ENCODE measurements at regions of chr12 and their contacts with region 1.

Region 1: DNA sequence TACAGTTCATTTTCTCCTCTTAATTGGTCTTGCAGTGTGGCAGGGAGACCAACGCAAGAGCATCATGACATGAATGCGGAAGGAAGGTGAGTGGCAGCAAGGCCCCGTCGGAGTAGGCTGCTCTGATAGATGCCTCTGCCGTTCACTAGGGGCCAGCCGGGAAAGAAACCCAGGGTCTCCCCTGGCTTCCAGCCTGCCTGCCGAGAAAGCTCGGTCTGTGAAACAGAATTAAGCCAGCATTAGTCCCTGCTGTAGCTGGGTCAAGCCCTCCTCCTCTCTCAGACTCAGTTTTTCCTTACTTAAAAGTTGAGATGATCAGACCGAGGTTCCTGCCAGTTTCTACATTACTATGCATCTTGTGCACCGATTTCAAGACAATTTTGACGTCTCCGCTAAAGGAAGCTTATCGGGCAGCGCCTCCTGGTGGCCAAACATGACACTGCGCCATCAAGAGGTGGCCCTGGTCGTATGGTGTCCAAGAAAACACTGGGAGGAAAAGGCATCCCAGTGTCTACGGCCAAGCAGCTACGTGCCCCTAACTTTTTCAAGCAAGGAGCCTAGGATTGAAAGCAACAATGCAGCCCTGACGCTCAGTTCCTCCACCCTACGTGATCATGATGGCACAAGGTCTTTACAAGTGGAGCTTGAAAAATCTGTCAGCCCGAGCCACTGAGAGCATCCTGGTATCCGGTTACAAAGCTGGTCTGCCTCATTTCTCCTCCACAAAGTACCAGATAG is 131.6 kb downstream of the KSR2 start:
- DNase-seq: peak; percentile 87
- H3K4me3 ChIP-seq: peak overlapping the region in 1 of 3 experiments; percentile 29
- H3K27ac ChIP-seq: no peak overlapping the region
- H3K4me1 ChIP-seq: peaks cover 5% of the 10 kb centered on the region
- H3K27me3 ChIP-seq: no peaks in the 10 kb centered on the region
- CTCF ChIP-seq: peak; percentile 94 to 98
- POLR2A ChIP-seq: no peak

Region 2: GRCh38 chr12:117236456-117237001 is 600.6 kb before region 1 on chr12:
- CTCF ChIA-PET with region 1: interaction called, 64 read pairs
- POLR2A ChIA-PET with region 1: no interaction called
- dilution Hi-C with region 1: no loop called
- intact Hi-C with region 1: loop called (anchors 1 kb)
- DNase-seq: peak; percentile 45
- H3K4me3 ChIP-seq: no peak overlapping the region
- H3K27ac ChIP-seq: no peak overlapping the region
- H3K4me1 ChIP-seq: no peaks in the 10 kb centered on the region
- H3K27me3 ChIP-seq: no peaks in the 10 kb centered on the region
- CTCF ChIP-seq: peak; percentile 78 to 91
- POLR2A ChIP-seq: no peak

Region 3: GRCh38 chr12:117450209-117450608 is 387.0 kb before region 1 on chr12:
- CTCF ChIA-PET with region 1: no interaction called
- POLR2A ChIA-PET with region 1: no interaction called
- dilution Hi-C with region 1: no loop called
- intact Hi-C with region 1: loop called (anchors 5 kb)
- DNase-seq: no peak
- H3K4me3 ChIP-seq: no peak overlapping the region
- H3K27ac ChIP-seq: no peak overlapping the region
- H3K4me1 ChIP-seq: no peaks in the 10 kb centered on the region
- H3K27me3 ChIP-seq: no peaks in the 10 kb centered on the region
- CTCF ChIP-seq: no peak
- POLR2A ChIP-seq: no peak

Region 4: GRCh38 chr12:117587631-117588287 is 249.4 kb before region 1 on chr12:
- CTCF ChIA-PET with region 1: interaction called, 94 read pairs
- POLR2A ChIA-PET with region 1: no interaction called
- dilution Hi-C with region 1: no loop called
- intact Hi-C with region 1: loop called (anchors 1 kb)
- DNase-seq: peak; percentile 57
- H3K4me3 ChIP-seq: peak overlapping the region in 1 of 3 experiments; percentile 9
- H3K27ac ChIP-seq: no peak overlapping the region
- H3K4me1 ChIP-seq: no peaks in the 10 kb centered on the region
- H3K27me3 ChIP-seq: no peaks in the 10 kb centered on the region
- CTCF ChIP-seq: peak; percentile 83 to 96
- POLR2A ChIP-seq: no peak

Region 5: DNA sequence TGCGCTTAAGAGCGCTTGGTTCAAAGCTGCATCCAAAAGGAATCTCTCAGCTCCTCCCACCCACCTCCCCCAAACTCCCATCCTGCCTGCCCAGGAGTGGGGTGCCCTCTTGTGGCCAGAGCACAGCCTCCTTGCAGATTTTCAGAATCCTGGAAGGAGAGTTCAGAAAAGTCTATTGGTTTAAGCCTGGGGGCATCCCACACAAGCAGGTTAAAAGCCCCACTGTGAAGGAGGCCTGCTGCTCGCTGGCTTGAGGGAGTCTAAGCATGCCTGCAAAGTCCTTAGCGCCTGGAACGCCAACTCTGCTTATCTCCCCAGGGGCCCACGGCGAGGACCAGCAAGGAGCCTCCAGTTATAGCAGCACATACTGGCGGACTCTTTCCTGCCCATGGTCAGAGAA is 165.4 kb before region 1 on chr12:
- CTCF ChIA-PET with region 1: interaction called, 9 read pairs
- POLR2A ChIA-PET with region 1: no interaction called
- dilution Hi-C with region 1: no loop called
- intact Hi-C with region 1: loop called (anchors 1 kb)
- DNase-seq: peak; percentile 44
- H3K4me3 ChIP-seq: no peak overlapping the region
- H3K27ac ChIP-seq: no peak overlapping the region
- H3K4me1 ChIP-seq: peaks cover 33% of the 10 kb centered on the region
- H3K27me3 ChIP-seq: no peaks in the 10 kb centered on the region
- CTCF ChIP-seq: peak; percentile 39 to 67
- POLR2A ChIP-seq: no peak

Region 6: DNA sequence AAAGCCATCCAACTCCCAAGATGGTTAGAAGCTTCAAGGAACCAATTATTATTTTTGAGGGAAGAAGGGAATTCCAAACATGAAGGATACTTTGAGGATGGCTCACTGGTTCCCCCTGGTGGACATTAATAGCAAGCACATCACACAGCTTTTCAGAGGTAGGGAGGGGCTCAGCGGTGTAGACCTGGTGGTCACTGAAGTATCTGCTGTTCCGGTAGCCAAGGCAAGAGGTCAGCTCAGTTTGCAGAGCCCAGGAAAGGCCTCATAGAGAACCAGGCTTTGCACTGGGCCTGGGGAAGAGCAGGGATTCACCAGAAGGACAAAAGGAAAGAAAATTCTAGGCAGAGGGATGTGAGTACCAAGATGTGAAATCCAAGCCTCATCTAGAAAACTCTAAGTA is 12.9 kb after region 1 on chr12:
- CTCF ChIA-PET with region 1: interaction called, 53 read pairs
- POLR2A ChIA-PET with region 1: no interaction called
- dilution Hi-C with region 1: no loop called
- intact Hi-C with region 1: no loop called
- DNase-seq: peak; percentile 54
- H3K4me3 ChIP-seq: no peak overlapping the region
- H3K27ac ChIP-seq: no peak overlapping the region
- H3K4me1 ChIP-seq: no peaks in the 10 kb centered on the region
- H3K27me3 ChIP-seq: peaks cover 6% of the 10 kb centered on the region in 2 experiments
- CTCF ChIP-seq: peak; percentile 86 to 88
- POLR2A ChIP-seq: no peak

Region 7: GRCh38 chr12:118346895-118347294 is 509.7 kb after region 1 on chr12:
- CTCF ChIA-PET with region 1: no interaction called
- POLR2A ChIA-PET with region 1: no interaction called
- dilution Hi-C with region 1: no loop called
- intact Hi-C with region 1: no loop called
- DNase-seq: no peak
- H3K4me3 ChIP-seq: no peak overlapping the region
- H3K27ac ChIP-seq: no peak overlapping the region
- H3K4me1 ChIP-seq: no peaks in the 10 kb centered on the region
- H3K27me3 ChIP-seq: no peaks in the 10 kb centered on the region
- CTCF ChIP-seq: no peak
- POLR2A ChIP-seq: no peak